ENCODE measurements at regions of chr20 and their contacts with region 1.

Region 1: GRCh38 chr20:17682103-17682888 is at the start of gene RRBP1:
- DNase-seq: peak; percentile 98 to 99 (median 99)
- H3K4me3 ChIP-seq: peak within 1 kb of the TSS in 3 of 4 donors; percentile 41 to 93 (median 58)
- H3K27ac ChIP-seq: peak within 1 kb of the TSS; percentile 42 to 100 (median 95)
- H3K4me1 ChIP-seq: peaks cover 11 to 20% of the 10 kb centered on the region in 2 donors
- H3K27me3 ChIP-seq: no peaks in the 10 kb centered on the region
- CTCF ChIP-seq: peak; percentile 30 to 76 (median 60)
- POLR2A ChIP-seq: peak; percentile 96 to 99
- total RNA-seq, gene RRBP1: 73.9 to 261 (median 120) TPM

Region 2: DNA sequence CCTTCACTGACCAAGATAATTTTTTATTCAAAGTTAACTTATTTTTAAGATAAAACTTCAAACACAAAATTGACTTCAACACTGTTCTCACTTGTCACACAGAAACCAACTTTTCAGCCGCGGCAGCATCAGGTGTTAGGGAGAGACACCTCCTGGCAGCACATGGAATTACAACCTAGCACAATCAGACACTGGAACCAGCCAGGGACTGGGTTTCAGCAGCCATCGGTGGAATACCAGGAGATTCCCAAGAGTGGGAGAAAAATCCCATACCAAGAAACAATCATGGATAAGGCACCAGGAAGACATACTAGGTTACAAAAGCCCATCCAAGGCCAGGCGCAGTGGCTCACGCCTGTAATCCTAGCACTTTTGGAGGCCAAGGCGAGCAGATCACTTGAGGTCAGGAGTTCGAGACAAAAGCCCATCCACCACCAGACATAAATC is 216.3 kb after region 1 on chr20:
- intact Hi-C with region 1: loop called in 1 of 2 experiments (anchors 5 kb)
- DNase-seq: peak; percentile 65 to 93 (median 83)
- H3K4me3 ChIP-seq: no peak overlapping the region
- H3K27ac ChIP-seq: no peak overlapping the region
- H3K4me1 ChIP-seq: peaks cover 23 to 27% of the 10 kb centered on the region in 2 donors
- H3K27me3 ChIP-seq: no peaks in the 10 kb centered on the region
- CTCF ChIP-seq: peak; percentile 88 to 98 (median 96)
- POLR2A ChIP-seq: no peak

Region 3: GRCh38 chr20:17995967-17996819 is 313.9 kb after region 1 on chr20:
- intact Hi-C with region 1: loop called in 1 of 2 experiments (anchors 10 kb)
- DNase-seq: peak; percentile 43 to 84 (median 61)
- H3K4me3 ChIP-seq: no peak overlapping the region
- H3K27ac ChIP-seq: peak overlapping the region in 1 of 5 donors; percentile 15
- H3K4me1 ChIP-seq: peaks cover 0 to 5% of the 10 kb centered on the region in 2 donors
- H3K27me3 ChIP-seq: no peaks in the 10 kb centered on the region
- CTCF ChIP-seq: peak; percentile 94 to 100 (median 97)
- POLR2A ChIP-seq: no peak

Measured in adrenal gland (tissue), 19 donors.